Dorsolateral prefrontal cortex (tissue), 120 donors: ENCODE measurements at regions of chr21 and their contacts with region 1.

Region 1: DNA sequence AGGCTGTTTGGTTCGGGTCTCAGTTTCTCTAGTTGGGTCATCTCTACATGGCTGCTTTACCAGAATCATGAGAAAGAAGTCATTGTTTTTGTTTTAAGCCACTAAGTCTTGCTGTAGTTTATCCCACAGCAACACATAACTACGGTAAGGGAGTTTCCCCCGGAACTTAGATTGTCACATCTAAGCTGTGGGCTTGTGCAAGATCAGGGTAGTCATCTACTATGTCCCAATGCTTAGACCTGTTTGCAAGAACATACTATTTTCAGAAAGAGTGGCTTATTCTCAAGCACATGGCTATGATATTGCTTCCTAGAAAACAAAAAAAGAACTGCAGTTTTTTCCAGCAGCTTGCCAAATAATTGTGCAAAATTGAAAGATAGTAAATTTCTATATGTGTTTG is 18.0 kb upstream of the OLIG2 start:
- DNase-seq: no peak
- H3K4me3 ChIP-seq: no peak overlapping the region
- H3K27ac ChIP-seq: no peak overlapping the region
- H3K27me3 ChIP-seq: peaks cover 0 to 8% (median 0%) of the 10 kb centered on the region in 45 donors
- CTCF ChIP-seq: no peak

Region 2: DNA sequence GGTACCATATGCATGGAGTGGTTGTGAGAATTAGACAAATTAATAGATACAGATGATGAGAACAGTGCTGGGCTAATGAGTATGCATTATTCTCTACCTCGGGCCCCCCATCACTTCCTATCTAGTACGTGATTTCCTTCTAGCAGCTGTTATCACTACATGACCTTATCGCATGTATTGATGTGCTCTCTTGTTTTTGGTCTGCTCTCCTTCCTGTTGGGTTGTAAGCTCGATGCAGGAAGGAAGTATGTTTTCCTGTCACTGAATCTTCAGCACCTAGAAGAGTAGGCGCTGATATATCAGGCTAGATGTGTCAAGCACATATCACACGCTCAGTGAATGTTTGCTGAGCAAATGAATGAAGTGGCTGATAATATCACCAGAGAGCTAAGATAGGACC is 178.1 kb after region 1 on chr21:
- intact Hi-C with region 1: loop called in 1 of 2 experiments (anchors 10 kb)
- DNase-seq: no peak
- H3K4me3 ChIP-seq: no peak overlapping the region
- H3K27ac ChIP-seq: no peak overlapping the region
- H3K27me3 ChIP-seq: peaks cover 0 to 7% (median 0%) of the 10 kb centered on the region in 45 donors
- CTCF ChIP-seq: no peak

Region 3: GRCh38 chr21:33636712-33637111 is 629.0 kb after region 1 on chr21:
- intact Hi-C with region 1: no loop called
- DNase-seq: no peak
- H3K4me3 ChIP-seq: no peak overlapping the region
- H3K27ac ChIP-seq: no peak overlapping the region
- H3K27me3 ChIP-seq: no peaks in the 10 kb centered on the region
- CTCF ChIP-seq: no peak